Left ventricle myocardium superior (tissue), 1 donor: ENCODE measurements at regions of chr12 and their contacts with region 1.

Region 1: GRCh38 chr12:113196996-113197395 is 11.5 kb downstream of the RITA1 start:
- DNase-seq: peak; percentile 67
- ATAC-seq: peak; percentile 83

Region 2: DNA sequence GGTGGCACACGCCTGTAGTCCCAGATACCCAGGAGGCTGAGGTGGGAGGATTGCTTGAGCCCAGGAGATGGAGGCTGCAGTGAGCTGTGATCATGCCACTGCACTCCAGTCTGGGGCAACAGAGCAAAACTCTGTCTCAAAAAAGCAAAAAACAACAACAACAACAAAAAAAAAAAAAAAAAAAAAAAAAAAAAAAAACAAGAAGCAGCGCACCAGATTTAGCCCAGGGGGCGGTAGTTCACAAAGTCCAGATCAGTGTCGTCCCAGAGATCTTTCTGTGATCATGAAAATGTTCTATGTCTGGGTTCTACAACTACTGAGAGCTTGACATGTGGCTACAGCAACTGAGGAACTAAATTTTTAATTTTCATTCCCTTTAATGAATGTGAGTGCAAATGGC is 191.2 kb before region 1 on chr12:
- intact Hi-C with region 1: no loop called
- DNase-seq: no peak
- ATAC-seq: no peak

Region 3: DNA sequence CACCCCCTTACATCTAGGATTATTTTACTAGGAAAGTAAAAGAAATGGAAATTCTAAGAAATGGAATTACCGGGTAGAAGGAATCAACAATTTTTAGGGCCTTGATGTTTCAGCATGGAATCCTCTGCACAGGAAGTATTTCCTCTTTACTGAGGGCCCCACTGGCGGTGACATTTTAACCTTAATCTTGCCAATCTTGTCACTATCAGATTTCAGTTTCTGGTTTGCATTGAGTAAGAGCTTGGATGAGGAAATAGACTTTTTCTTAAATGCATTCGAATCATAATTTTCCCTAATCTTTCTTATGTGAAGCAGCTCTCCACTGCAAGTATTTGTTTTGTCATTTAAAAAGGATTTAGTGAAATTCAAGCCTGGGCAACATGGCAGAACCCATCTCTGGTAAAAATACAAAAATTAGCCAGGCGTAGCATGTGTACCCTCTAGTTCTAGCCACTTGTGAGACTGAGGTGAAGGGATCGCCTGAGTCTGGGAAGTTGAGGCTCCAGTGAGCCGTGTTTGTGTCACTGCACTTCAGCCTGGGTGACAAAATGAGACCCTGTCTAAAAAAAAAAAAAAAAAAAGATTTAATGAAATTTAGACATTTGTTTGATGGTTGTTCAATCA is 65.0 kb after region 1 on chr12:
- intact Hi-C with region 1: loop called (anchors 10 kb)
- DNase-seq: no peak
- ATAC-seq: no peak

Region 4: GRCh38 chr12:113299619-113300237 is 102.7 kb after region 1 on chr12:
- intact Hi-C with region 1: no loop called
- DNase-seq: peak; percentile 79
- ATAC-seq: peak; percentile 63

Region 5: GRCh38 chr12:114408886-114409851 is 1212.2 kb after region 1 on chr12:
- intact Hi-C with region 1: no loop called
- DNase-seq: peak; percentile 76
- ATAC-seq: peak; percentile 53